ENCODE measurements at regions of chr13 and their contacts with region 1.

Region 1: DNA sequence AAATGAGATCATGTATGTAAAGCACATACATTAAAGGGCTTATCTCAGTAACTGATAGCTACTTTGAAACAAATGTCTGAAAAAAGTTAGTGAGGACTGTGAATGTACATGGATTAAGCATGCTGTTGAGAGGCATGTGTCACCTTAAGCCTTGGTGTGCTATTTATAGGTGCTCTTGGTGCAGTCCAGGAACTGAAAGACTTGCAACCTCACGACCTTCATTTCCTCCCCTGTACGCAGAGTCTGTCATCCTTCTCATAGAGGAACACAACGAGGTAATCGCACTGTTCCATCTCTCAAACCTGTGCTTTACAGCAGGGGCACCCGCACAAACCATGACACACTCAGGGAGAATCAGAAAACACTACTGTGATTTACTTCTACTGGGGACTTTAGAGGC is 65.6 kb downstream of the UFM1 start:
- DNase-seq: peak; percentile 62
- CTCF ChIP-seq: no peak

Region 2: GRCh38 chr13:38381890-38382289 is 33.3 kb before region 1 on chr13:
- CTCF ChIA-PET with region 1: no interaction called
- POLR2A ChIA-PET with region 1: no interaction called
- DNase-seq: no peak
- CTCF ChIP-seq: no peak

Region 3: DNA sequence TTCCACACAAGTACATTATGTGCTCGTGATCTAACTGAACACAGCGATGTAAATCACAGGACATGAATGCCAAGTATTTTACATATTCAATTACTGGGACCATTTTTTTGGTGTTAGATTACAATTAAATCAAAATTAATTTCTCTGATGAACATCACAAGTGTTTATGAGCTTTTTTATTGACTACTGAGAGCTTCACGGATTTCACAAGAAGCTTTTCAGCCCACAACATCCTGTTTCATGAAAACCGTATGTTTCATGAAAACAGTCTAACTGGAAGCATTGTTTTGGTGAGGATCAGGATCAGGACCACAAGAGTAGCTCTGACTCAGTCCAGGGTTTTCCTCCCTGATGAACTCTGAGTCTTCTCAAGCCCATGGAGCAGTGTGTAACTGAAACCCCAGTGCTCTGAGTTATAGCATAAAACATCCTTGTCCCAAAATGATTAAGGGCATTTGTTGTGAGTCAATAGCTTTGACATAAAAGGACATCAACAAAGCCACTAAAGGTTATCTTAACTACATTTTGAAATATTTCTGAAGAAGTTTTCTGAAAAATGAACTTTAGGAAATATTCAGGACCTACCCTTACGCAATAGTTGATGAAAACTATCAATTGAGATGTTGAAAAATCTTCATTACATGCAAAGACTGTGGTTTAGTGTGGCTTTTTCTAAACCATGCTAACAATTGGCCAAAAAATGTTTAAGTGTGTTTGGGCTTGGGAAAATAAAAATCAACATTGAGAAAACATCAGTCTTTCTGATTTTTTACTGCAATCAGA is 16.3 kb before region 1 on chr13:
- CTCF ChIA-PET with region 1: interaction called, 15 read pairs
- POLR2A ChIA-PET with region 1: no interaction called
- DNase-seq: no peak
- CTCF ChIP-seq: no peak